ENCODE measurements at regions of chr1 and their contacts with region 1.

Region 1: DNA sequence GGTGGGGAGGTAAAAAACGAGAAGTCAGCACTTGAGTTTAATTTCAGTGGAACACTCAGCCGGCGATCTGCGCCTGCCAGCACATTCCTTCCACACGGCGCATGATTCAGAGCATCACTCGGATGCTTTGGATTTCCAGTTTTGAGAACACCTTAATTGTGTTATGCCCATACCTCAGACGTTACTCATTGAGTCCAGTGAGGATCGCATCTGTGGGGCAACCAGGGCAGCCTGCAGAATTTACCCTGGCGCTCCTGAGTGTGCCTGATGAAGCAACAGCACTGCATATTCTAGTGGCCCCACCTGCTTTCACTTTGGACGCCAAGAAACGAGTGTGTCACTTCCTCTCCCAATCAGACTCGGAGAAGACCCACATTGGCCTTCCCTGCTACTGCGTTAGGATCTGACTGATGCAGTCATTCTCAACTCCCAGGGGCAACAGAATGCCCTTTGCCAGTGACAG is 19.9 kb downstream of the FAM89A start:
- DNase-seq: no peak
- ATAC-seq: peak in 3 of 4 donors; percentile 35 to 72 (median 49)
- H3K4me3 ChIP-seq: peak overlapping the region in 1 of 12 donors; percentile 6
- H3K27ac ChIP-seq: peak overlapping the region in 9 of 12 donors; percentile 11 to 82 (median 39)
- H3K4me1 ChIP-seq: peaks cover 0 to 22% (median 6%) of the 10 kb centered on the region in 12 donors
- H3K27me3 ChIP-seq: no peaks in the 10 kb centered on the region
- CTCF ChIP-seq: no peak
- POLR2A ChIP-seq: no peak

Region 2: DNA sequence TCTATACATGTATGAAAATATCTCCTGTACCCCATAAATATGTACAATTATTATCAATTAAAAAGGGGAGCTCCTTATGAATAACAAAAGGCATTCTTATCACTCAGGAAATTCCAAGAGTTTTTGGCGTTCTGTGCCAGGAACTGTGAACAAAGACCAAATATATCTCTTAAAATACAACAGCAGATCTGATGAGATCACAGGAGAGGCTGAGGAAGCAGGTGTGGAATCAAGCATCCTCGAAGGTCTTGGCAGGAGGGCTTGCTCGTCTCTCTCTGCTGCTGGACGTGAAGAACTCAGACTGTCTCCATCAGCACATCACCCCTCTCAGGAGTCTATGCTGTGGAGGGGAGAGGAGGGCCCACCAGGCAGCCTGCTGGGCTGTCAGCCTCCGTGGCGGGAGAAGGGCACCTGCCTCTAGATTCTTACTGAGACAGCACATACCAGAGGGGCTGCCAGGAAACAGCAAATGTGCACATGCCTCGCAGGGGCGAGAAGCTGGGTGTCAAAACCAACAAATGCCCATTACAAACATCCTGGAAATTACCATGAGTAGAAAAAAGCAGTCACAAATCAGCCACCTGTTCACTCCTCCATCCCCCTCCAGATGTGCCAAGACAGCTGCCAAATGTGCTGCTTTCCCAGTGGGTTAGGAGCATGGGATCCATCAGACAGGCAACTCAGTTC is 50.7 kb after region 1 on chr1:
- intact Hi-C with region 1: loop called in 1 of 10 experiments (anchors 10 kb)
- DNase-seq: peak in 1 of 5 donors; percentile 25
- ATAC-seq: peak in 2 of 4 donors; percentile 53 to 74
- H3K4me3 ChIP-seq: no peak overlapping the region
- H3K27ac ChIP-seq: peak overlapping the region in 4 of 12 donors; percentile 6 to 53 (median 28)
- H3K4me1 ChIP-seq: peaks cover 0 to 25% (median 7%) of the 10 kb centered on the region in 12 donors
- H3K27me3 ChIP-seq: no peaks in the 10 kb centered on the region
- CTCF ChIP-seq: no peak
- POLR2A ChIP-seq: no peak